ENCODE measurements at regions of chr18 and their contacts with region 1.

Region 1: GRCh38 chr18:36688020-36688965 is 140.5 kb downstream of the TPGS2 start:
- DNase-seq: peak in 5 of 9 donors; percentile 8 to 47 (median 25)
- ATAC-seq: peak; percentile 31
- H3K4me3 ChIP-seq: no peak overlapping the region
- H3K4me3 Mint-ChIP-seq: no peak overlapping the region
- H3K27ac ChIP-seq: no peak overlapping the region
- H3K27ac Mint-ChIP-seq: no peak overlapping the region
- H3K4me1 ChIP-seq: no peaks in the 10 kb centered on the region
- H3K4me1 Mint-ChIP-seq: no peaks in the 10 kb centered on the region
- H3K27me3 ChIP-seq: no peaks in the 10 kb centered on the region
- H3K27me3 Mint-ChIP-seq: peaks cover 4 to 24% (median 19%) of the 10 kb centered on the region in 5 donors

Region 2: GRCh38 chr18:36446059-36446458 is 242.2 kb before region 1 on chr18:
- CTCF ChIA-PET with region 1: no interaction called
- POLR2A ChIA-PET with region 1: no interaction called
- intact Hi-C with region 1: no loop called
- DNase-seq: no peak
- ATAC-seq: no peak
- H3K4me3 ChIP-seq: no peak overlapping the region
- H3K4me3 Mint-ChIP-seq: no peak overlapping the region
- H3K27ac ChIP-seq: no peak overlapping the region
- H3K27ac Mint-ChIP-seq: no peak overlapping the region
- H3K4me1 ChIP-seq: no peaks in the 10 kb centered on the region
- H3K4me1 Mint-ChIP-seq: no peaks in the 10 kb centered on the region
- H3K27me3 ChIP-seq: no peaks in the 10 kb centered on the region
- H3K27me3 Mint-ChIP-seq: peaks cover 2 to 21% (median 10%) of the 10 kb centered on the region in 5 donors

Region 3: GRCh38 chr18:36899289-36899688 is 211.0 kb after region 1 on chr18:
- CTCF ChIA-PET with region 1: no interaction called
- POLR2A ChIA-PET with region 1: no interaction called
- intact Hi-C with region 1: loop called in 1 of 2 experiments (anchors 2 kb)
- DNase-seq: peak in 1 of 9 donors; percentile 11
- ATAC-seq: no peak
- H3K4me3 ChIP-seq: no peak overlapping the region
- H3K4me3 Mint-ChIP-seq: no peak overlapping the region
- H3K27ac ChIP-seq: no peak overlapping the region
- H3K27ac Mint-ChIP-seq: no peak overlapping the region
- H3K4me1 ChIP-seq: no peaks in the 10 kb centered on the region
- H3K4me1 Mint-ChIP-seq: no peaks in the 10 kb centered on the region
- H3K27me3 ChIP-seq: no peaks in the 10 kb centered on the region
- H3K27me3 Mint-ChIP-seq: no peaks in the 10 kb centered on the region